HepG2 (cell line): ENCODE measurements at regions of chr4 and their contacts with region 1.

Region 1: GRCh38 chr4:109977854-109978501 is 65.3 kb downstream of the EGF start:
- DNase-seq: peak; percentile 18
- ATAC-seq: no peak
- H3K4me3 ChIP-seq: no peak overlapping the region
- H3K27ac ChIP-seq: no peak overlapping the region
- H3K4me1 ChIP-seq: peaks cover 17% of the 10 kb centered on the region
- H3K27me3 ChIP-seq: no peaks in the 10 kb centered on the region
- CTCF ChIP-seq: peak; percentile 50
- EP300 ChIP-seq: no peak
- POLR2A ChIP-seq: no peak
- RAD21 ChIP-seq: no peak

Region 2: GRCh38 chr4:109648266-109648996 is 329.5 kb before region 1 on chr4:
- CTCF ChIA-PET with region 1: no interaction called
- POLR2A ChIA-PET with region 1: no interaction called
- in situ Hi-C with region 1: no loop called
- intact Hi-C with region 1: loop called (anchors 10 kb)
- DNase-seq: no peak
- ATAC-seq: no peak
- H3K4me3 ChIP-seq: no peak overlapping the region
- H3K27ac ChIP-seq: no peak overlapping the region
- H3K4me1 ChIP-seq: no peaks in the 10 kb centered on the region
- H3K27me3 ChIP-seq: no peaks in the 10 kb centered on the region; a peak in 1 of 5 replicates
- CTCF ChIP-seq: no peak
- EP300 ChIP-seq: no peak
- POLR2A ChIP-seq: no peak
- RAD21 ChIP-seq: no peak

Region 3: GRCh38 chr4:109702950-109703663 is 274.9 kb before region 1 on chr4 and contains the start of gene CASP6:
- CTCF ChIA-PET with region 1: no interaction called
- POLR2A ChIA-PET with region 1: no interaction called
- in situ Hi-C with region 1: no loop called
- intact Hi-C with region 1: loop called (anchors 5 kb)
- DNase-seq: peak; percentile 36
- ATAC-seq: peak; percentile 83
- H3K4me3 ChIP-seq: peak within 1 kb of the TSS; percentile 69 to 76 (median 69)
- H3K27ac ChIP-seq: peak within 1 kb of the TSS; percentile 68
- H3K4me1 ChIP-seq: peaks cover 37% of the 10 kb centered on the region
- H3K27me3 ChIP-seq: no peaks in the 10 kb centered on the region
- CTCF ChIP-seq: peak; percentile 49
- EP300 ChIP-seq: no peak
- POLR2A ChIP-seq: peak; percentile 29 to 64; a peak in 3 of 4 replicates
- RAD21 ChIP-seq: 0 out of 2 replicates have a peak, but pooled peaks have one; percentile 28
- total RNA-seq, gene CASP6: 34.6 and 42.4 TPM in 2 replicates

Region 4: DNA sequence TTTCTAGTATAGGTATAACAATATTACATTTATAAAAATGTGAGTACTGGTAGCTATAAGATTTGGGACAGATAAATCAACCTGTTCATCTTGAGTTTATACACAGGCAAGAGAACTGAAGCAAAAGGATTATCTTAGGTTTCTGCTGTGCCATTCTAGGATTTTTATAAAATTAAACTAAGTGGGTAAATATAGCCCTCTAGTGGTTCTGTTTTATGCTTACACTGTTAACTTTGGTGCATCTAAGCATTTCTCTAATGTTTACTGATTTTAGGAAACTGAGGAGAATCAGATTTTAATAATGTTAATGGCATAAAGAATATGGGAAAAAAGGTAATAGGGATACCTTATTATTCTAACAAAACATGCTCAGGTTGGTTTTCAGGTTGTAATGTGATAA is 151.3 kb before region 1 on chr4:
- CTCF ChIA-PET with region 1: no interaction called
- POLR2A ChIA-PET with region 1: no interaction called
- in situ Hi-C with region 1: no loop called
- intact Hi-C with region 1: loop called (anchors 5 kb)
- DNase-seq: no peak
- ATAC-seq: peak; percentile 57; the same call in 2 of the 3 replicates
- H3K4me3 ChIP-seq: no peak overlapping the region
- H3K27ac ChIP-seq: no peak overlapping the region
- H3K4me1 ChIP-seq: no peaks in the 10 kb centered on the region
- H3K27me3 ChIP-seq: no peaks in the 10 kb centered on the region
- CTCF ChIP-seq: peak; percentile 38
- EP300 ChIP-seq: no peak
- POLR2A ChIP-seq: no peak
- RAD21 ChIP-seq: no peak

Region 5: DNA sequence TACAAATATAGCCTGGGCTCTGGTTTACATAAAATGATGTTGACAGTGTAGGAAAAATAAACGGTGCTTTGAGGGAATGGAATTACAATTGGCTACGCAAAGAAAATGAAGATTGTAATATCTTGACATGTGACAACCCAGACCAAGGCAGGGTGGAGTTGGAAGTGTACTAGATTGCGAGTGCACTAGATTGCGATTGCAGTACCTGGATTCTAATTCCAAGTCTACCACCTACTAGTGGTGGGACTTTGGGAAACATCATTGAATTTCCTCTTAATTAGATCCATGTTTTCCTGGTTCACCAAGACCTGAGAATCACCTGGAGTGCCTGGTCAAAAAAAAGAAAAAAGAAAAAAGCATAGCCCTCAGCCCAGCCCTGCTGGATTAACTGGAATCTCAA is 46.7 kb before region 1 on chr4:
- CTCF ChIA-PET with region 1: no interaction called
- POLR2A ChIA-PET with region 1: no interaction called
- in situ Hi-C with region 1: no loop called
- intact Hi-C with region 1: no loop called
- DNase-seq: no peak
- ATAC-seq: no peak
- H3K4me3 ChIP-seq: no peak overlapping the region
- H3K27ac ChIP-seq: no peak overlapping the region
- H3K4me1 ChIP-seq: no peaks in the 10 kb centered on the region
- H3K27me3 ChIP-seq: no peaks in the 10 kb centered on the region
- CTCF ChIP-seq: no peak
- EP300 ChIP-seq: no peak
- POLR2A ChIP-seq: no peak
- RAD21 ChIP-seq: no peak